B cell (primary cell): ENCODE measurements at regions of chr2 and their contacts with region 1.

Region 1: GRCh38 chr2:20822535-20823490 is at the start of gene LDAH:
- DNase-seq: peak; percentile 92
- ATAC-seq: peak; percentile 79
- H3K4me3 ChIP-seq: peak within 1 kb of the TSS; percentile 64 to 99 (median 88)
- H3K4me3 Mint-ChIP-seq: peak within 1 kb of the TSS; percentile 98
- H3K27ac ChIP-seq: peak within 1 kb of the TSS; percentile 89 to 96
- H3K27ac Mint-ChIP-seq: peak within 1 kb of the TSS; percentile 99
- H3K4me1 ChIP-seq: peaks cover 0 to 7% of the 10 kb centered on the region in 2 donors
- H3K4me1 Mint-ChIP-seq: peaks cover 26% of the 10 kb centered on the region
- H3K27me3 ChIP-seq: peaks cover 0 to 2% (median 0%) of the 10 kb centered on the region in 4 experiments
- H3K27me3 Mint-ChIP-seq: peaks cover 1% of the 10 kb centered on the region
- CTCF ChIP-seq: no peak
- total RNA-seq, gene LDAH: 27.1 and 31.3 TPM in 2 replicates

Region 2: GRCh38 chr2:20666304-20667150 is 156.3 kb before region 1 on chr2 and contains the start of gene GDF7:
- CTCF ChIA-PET with region 1: interaction called, 13 read pairs
- POLR2A ChIA-PET with region 1: interaction called, 9 read pairs
- intact Hi-C with region 1: no loop called
- DNase-seq: peak; percentile 87
- ATAC-seq: peak; percentile 82
- H3K4me3 ChIP-seq: peak within 1 kb of the TSS in 4 of 5 experiments; percentile 57 to 80 (median 64)
- H3K4me3 Mint-ChIP-seq: peak within 1 kb of the TSS; percentile 95
- H3K27ac ChIP-seq: peak within 1 kb of the TSS; percentile 47 to 61
- H3K27ac Mint-ChIP-seq: peak within 1 kb of the TSS; percentile 94
- H3K4me1 ChIP-seq: peaks cover 35 to 64% of the 10 kb centered on the region in 2 donors
- H3K4me1 Mint-ChIP-seq: peaks cover 35% of the 10 kb centered on the region
- H3K27me3 ChIP-seq: peaks cover 0 to 85% (median 25%) of the 10 kb centered on the region in 4 experiments
- H3K27me3 Mint-ChIP-seq: peaks cover 14% of the 10 kb centered on the region
- CTCF ChIP-seq: peak; percentile 48
- total RNA-seq, gene GDF7: 14.8 and 15.3 TPM in 2 replicates

Region 3: DNA sequence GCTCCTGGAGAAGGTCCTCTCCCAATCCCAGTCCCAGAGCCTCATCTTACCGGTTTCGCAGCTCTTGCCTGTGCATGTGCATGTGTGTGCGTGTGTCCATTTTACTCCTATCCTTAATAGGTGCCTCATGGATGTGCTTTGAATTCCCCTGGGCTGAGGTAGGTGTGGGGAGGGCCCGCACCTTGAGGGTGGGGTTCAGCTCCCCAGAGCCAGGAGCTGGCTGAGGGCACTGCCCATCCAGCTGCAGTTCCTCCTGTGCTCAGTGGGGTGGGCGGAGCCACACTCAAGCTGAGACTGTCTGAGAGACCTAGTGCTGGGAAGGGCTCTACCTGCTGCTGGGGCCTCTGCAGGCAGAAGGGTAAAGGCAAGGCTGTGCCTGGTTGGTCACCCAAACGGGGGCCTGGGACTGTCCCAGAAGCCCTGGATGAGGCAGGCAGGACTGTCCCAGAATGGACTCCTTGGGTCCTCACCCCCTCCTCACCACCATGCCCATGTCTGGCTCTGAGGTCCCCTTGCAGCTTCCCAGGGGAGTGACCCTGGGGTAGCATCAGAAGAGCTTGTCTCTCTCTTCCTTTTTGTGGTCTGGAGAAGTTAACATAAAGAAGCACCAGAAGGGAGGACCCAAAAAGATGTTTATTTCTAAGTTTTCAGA is 147.0 kb before region 1 on chr2:
- CTCF ChIA-PET with region 1: interaction called, 6 read pairs
- POLR2A ChIA-PET with region 1: interaction called, 3 read pairs
- intact Hi-C with region 1: loop called (anchors 5 kb)
- DNase-seq: peak; percentile 83
- ATAC-seq: peak; percentile 79
- H3K4me3 ChIP-seq: peak overlapping the region in 1 of 5 experiments; percentile 15
- H3K4me3 Mint-ChIP-seq: peak overlapping the region; percentile 80
- H3K27ac ChIP-seq: peak overlapping the region; percentile 63 to 82
- H3K27ac Mint-ChIP-seq: peak overlapping the region; percentile 98
- H3K4me1 ChIP-seq: peaks cover 35 to 86% of the 10 kb centered on the region in 2 donors
- H3K4me1 Mint-ChIP-seq: peaks cover 59% of the 10 kb centered on the region
- H3K27me3 ChIP-seq: peaks cover 0 to 16% (median 4%) of the 10 kb centered on the region in 4 experiments
- H3K27me3 Mint-ChIP-seq: no peaks in the 10 kb centered on the region
- CTCF ChIP-seq: no peak